Activated CD4-positive, alpha-beta memory T cell treated with anti-CD3 and anti-CD28 coated beads, Interleukin-2, amount 10 ng/mL, durations not matched to agents 7 days and 5 days (primary cell): ENCODE measurements at regions of chr5 and their contacts with region 1.

Region 1: DNA sequence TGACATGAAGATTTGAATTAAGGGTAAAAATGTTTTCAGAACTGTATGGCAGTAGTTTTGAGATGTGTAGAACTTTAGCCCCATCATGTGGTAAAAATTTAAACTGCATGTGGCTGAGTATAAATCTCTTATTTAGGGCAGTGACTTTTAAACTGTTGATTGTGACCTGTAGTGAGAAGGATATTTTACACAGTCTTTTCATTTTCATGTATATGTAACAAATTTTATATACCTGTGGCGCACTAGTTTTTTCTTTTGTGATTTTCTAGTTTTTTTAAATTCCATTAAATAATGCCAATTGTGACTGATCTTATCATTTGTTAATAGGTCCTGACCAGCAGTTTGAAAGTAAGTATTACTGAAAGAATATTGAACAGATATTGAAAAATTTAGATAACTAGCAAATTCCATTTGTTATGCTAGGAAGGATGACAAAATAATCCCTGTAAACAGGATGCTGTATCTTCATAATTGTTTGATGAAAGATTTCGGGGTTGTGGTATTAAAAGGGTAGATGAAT is 47.2 kb downstream of the GPBP1 start:
- DNase-seq: no peak
- H3K4me3 Mint-ChIP-seq: no peak overlapping the region
- H3K27ac Mint-ChIP-seq: peak overlapping the region; percentile 43
- H3K4me1 Mint-ChIP-seq: peaks cover 32% of the 10 kb centered on the region
- H3K27me3 Mint-ChIP-seq: no peaks in the 10 kb centered on the region

Region 2: GRCh38 chr5:56900858-56901578 is 320.1 kb before region 1 on chr5:
- CTCF ChIA-PET with region 1: interaction called, 12 read pairs
- POLR2A ChIA-PET with region 1: no interaction called
- DNase-seq: peak; percentile 25
- H3K4me3 Mint-ChIP-seq: no peak overlapping the region
- H3K27ac Mint-ChIP-seq: no peak overlapping the region
- H3K4me1 Mint-ChIP-seq: no peaks in the 10 kb centered on the region
- H3K27me3 Mint-ChIP-seq: peaks cover 9% of the 10 kb centered on the region

Region 3: GRCh38 chr5:57152316-57152715 is 68.8 kb before region 1 on chr5:
- CTCF ChIA-PET with region 1: no interaction called
- POLR2A ChIA-PET with region 1: no interaction called
- DNase-seq: no peak
- H3K4me3 Mint-ChIP-seq: no peak overlapping the region
- H3K27ac Mint-ChIP-seq: no peak overlapping the region
- H3K4me1 Mint-ChIP-seq: no peaks in the 10 kb centered on the region
- H3K27me3 Mint-ChIP-seq: no peaks in the 10 kb centered on the region

Region 4: GRCh38 chr5:57231607-57232006 is 10.5 kb after region 1 on chr5:
- CTCF ChIA-PET with region 1: no interaction called
- POLR2A ChIA-PET with region 1: no interaction called
- DNase-seq: no peak
- H3K4me3 Mint-ChIP-seq: no peak overlapping the region
- H3K27ac Mint-ChIP-seq: no peak overlapping the region
- H3K4me1 Mint-ChIP-seq: peaks cover 13% of the 10 kb centered on the region
- H3K27me3 Mint-ChIP-seq: no peaks in the 10 kb centered on the region